RWPE1 (cell line): ENCODE measurements at regions of chr11 and their contacts with region 1.

Region 1: DNA sequence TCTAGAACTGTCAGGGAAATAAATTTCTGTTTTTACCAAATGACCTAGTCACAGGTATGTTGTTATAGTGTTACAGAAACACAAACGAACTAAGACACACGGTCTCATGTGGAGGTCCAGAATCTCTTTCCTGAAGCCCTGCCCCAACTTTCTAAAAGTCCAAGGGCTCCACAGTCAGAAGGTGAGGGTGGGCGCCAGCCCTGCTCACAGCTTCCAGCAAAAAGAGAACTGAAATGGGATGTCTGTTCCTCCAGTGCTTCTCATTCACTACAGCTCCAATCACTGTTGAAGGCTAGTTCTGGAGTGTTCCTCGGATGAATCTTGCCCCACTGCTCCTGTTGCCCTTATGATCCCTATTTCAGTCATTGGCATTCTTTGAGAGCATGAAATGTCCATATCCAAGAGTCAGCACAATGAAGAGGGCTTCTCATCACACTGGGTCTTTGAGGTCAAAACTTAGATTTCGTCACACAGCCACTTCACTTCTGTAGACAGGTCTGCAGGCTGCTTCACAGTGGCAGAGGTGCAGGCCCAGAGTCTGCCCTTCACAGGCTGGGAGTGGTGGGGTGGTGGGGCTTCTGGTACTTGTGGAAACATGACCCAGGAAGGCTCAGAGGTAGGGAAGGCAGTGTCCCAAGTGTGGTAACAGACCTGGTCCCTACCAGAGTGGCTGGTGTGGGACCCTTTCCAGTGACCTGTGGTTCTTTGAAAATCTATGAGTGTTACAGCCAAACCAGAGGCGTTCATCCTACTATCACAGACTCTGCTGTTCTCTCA is 34.9 kb downstream of the FAM181B start:
- DNase-seq: no peak
- H3K27ac ChIP-seq: no peak overlapping the region
- CTCF ChIP-seq: no peak

Region 2: GRCh38 chr11:82680266-82680665 is 18.5 kb before region 1 on chr11:
- CTCF ChIA-PET with region 1: interaction called, 16 read pairs
- POLR2A ChIA-PET with region 1: no interaction called
- DNase-seq: no peak
- H3K27ac ChIP-seq: no peak overlapping the region
- CTCF ChIP-seq: no peak

Region 3: DNA sequence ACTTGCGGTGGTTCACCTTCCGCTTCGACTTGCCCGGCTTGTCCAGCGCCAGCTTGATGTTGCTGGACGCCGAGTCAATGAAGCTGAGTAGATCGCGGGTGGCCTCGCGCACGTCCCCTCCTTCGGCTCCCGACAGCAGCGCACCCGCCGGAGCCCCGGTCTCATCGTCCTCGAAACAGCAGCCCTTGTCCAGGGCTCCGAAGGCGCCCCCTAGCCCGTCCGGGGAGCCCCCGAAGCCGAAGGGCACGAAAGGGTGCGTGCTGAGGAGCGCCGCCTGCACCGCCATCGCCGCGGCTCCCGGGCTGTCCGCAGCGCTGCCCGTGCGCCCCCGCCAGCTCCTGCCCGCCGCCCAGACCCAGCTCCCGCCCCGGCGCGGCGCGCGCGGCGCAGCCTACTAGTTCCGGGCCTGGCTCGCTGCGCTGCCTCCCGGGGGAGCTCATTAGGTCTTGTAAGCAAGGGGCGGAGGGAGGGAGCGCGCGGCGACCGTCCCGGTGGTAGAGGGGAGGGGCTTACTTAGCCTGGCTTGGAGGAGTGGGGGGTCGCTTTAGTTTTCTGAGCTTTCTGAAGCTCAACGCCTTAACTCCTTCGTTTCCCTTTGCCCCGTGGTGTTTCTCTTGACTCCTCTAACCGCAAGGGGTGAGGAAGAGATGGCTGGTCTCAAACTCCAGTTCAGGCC is 34.8 kb after region 1 on chr11 and contains the start of gene FAM181B:
- CTCF ChIA-PET with region 1: no interaction called
- POLR2A ChIA-PET with region 1: no interaction called
- DNase-seq: peak; percentile 24
- H3K27ac ChIP-seq: no peak within 1 kb of the TSS
- CTCF ChIP-seq: no peak